GM12878 (cell line): ENCODE measurements at regions of chr15 and their contacts with region 1.

Region 1: GRCh38 chr15:72285927-72286516 is 13.7 kb upstream of the PARP6 start:
- DNase-seq: no peak
- ATAC-seq: peak; percentile 87
- H3K4me3 ChIP-seq: no peak overlapping the region
- H3K27ac ChIP-seq: no peak overlapping the region
- H3K4me1 ChIP-seq: no peaks in the 10 kb centered on the region
- H3K27me3 ChIP-seq: no peaks in the 10 kb centered on the region
- CTCF ChIP-seq: peak; percentile 52 to 83 (median 59)
- EP300 ChIP-seq: no peak
- POLR2A ChIP-seq: no peak
- RAD21 ChIP-seq: peak; percentile 30; the same call in 1 of the 2 replicates

Region 2: DNA sequence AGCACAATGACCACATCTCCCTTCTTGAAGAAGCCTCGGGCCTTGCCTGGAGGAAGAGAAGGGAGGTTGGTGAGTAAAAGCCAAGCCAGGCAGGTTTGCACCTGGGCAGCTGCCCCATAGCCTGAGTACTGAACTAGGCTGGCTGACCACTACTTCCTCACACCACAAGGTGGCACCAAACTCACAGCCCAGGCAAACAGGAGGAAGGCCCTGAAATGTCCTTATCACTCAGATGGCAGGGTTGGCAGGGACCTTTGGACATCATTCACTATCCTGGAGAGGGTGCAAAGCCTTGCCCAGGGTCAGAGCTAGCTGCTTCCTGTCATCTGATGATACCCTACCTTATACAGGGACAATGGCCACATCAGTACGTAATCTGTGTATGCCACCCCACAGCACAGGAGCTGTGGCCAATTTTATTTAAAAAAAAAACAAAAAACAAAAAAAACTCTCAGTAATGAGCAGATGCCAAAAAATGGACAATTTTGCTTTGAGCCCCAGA is 86.3 kb before region 1 on chr15:
- CTCF ChIA-PET with region 1: interaction called, 13 read pairs
- POLR2A ChIA-PET with region 1: no interaction called
- RAD21 ChIA-PET with region 1: interaction called, 3 read pairs
- SMC1A ChIA-PET with region 1: interaction called, 4 read pairs
- in situ Hi-C with region 1: no loop called
- intact Hi-C with region 1: loop called (anchors 5 kb)
- DNase-seq: peak; percentile 36
- ATAC-seq: peak; percentile 93
- H3K4me3 ChIP-seq: no peak overlapping the region
- H3K27ac ChIP-seq: no peak overlapping the region
- H3K4me1 ChIP-seq: no peaks in the 10 kb centered on the region; the same call in 1 of the 2 replicates
- H3K27me3 ChIP-seq: no peaks in the 10 kb centered on the region
- CTCF ChIP-seq: peak; percentile 90 to 95 (median 94)
- EP300 ChIP-seq: no peak
- POLR2A ChIP-seq: peak; percentile 52; the same call in 1 of the 2 replicates
- RAD21 ChIP-seq: peak; percentile 92

Region 3: DNA sequence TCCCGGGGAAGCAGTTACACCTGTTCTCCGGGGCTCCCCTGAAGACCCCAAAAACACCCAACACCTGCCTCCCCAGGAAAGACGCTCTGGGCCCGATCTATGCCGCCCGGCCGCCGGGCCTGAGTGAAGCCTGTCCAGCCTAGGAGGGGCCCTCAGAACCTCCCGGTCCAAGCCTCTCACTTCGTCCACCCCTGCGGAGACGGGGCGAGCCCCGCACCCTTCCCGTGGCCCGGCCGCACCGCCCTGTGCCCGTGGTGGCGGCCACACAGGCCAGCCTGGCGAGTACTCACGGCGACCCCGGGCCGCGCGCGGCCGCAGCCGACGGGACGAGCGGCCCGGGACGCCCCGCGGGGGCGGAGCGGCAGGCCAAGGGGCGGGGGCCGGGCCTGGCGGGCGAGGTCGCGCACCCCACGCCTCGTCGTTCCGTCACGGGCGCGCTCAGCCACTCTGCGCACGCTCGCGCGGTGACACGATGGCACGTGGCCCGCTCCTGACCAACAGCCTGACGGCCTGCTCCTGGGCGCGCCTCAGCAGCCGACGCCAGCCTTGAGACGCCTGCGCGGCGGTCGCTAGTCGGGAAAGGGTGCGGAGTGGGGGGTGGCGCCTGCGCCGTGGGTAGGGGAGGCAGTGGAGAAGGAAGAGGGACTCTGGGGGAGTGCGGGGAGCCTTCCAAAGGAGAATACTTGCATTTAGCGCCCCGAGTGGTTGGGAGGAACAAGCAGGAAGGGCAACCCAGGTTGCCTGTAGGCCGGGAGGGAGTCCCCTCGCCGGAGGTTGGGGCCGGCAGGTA is 13.6 kb before region 1 on chr15 and contains the start of gene PARP6:
- CTCF ChIA-PET with region 1: interaction called, 15 read pairs
- POLR2A ChIA-PET with region 1: interaction called, 3 read pairs
- RAD21 ChIA-PET with region 1: interaction called, 3 read pairs
- SMC1A ChIA-PET with region 1: interaction called, 4 read pairs
- in situ Hi-C with region 1: no loop called
- intact Hi-C with region 1: no loop called
- DNase-seq: peak; percentile 95
- ATAC-seq: peak; percentile 98
- H3K4me3 ChIP-seq: peak within 1 kb of the TSS; percentile 70
- H3K27ac ChIP-seq: peak within 1 kb of the TSS; percentile 70
- H3K4me1 ChIP-seq: peaks cover 6% of the 10 kb centered on the region; the same call in 1 of the 2 replicates
- H3K27me3 ChIP-seq: no peaks in the 10 kb centered on the region
- CTCF ChIP-seq: peak; percentile 64 to 77 (median 73)
- EP300 ChIP-seq: no peak
- POLR2A ChIP-seq: peak; percentile 83
- RAD21 ChIP-seq: peak; percentile 4; the same call in 1 of the 2 replicates
- polyA plus RNA-seq, gene PARP6: 14.3 to 23.7 TPM

Region 4: DNA sequence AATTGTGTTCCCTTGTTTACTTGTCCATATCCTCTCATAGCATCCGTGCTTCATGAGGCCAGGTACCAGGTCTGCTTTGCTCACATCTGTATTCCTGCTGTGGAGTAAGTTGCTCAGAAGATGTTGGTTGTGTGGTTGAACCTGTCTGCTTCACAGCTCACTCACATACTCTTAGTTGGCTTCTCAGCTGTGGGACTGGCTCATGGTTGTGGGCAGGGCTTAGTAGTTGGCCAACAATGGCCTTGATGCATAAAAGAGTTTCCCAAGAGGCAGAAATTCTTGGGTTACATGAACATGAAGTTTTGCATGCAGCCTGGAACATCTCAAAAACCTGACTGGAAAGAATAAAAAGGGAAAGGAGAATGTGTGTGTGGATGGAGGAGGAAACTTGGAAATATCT is 16.9 kb after region 1 on chr15:
- CTCF ChIA-PET with region 1: no interaction called
- POLR2A ChIA-PET with region 1: no interaction called
- RAD21 ChIA-PET with region 1: no interaction called
- SMC1A ChIA-PET with region 1: no interaction called
- in situ Hi-C with region 1: no loop called
- intact Hi-C with region 1: no loop called
- DNase-seq: no peak
- ATAC-seq: no peak
- H3K4me3 ChIP-seq: no peak overlapping the region
- H3K27ac ChIP-seq: no peak overlapping the region
- H3K4me1 ChIP-seq: no peaks in the 10 kb centered on the region
- H3K27me3 ChIP-seq: no peaks in the 10 kb centered on the region
- CTCF ChIP-seq: no peak
- EP300 ChIP-seq: no peak
- POLR2A ChIP-seq: no peak
- RAD21 ChIP-seq: no peak